ENCODE measurements at regions of chr17 and their contacts with region 1.

Region 1: GRCh38 chr17:8991514-8992285 is 26.2 kb upstream of the PIK3R5 start:
- DNase-seq: peak in 6 of 10 donors; percentile 28 to 74 (median 55)
- H3K4me3 ChIP-seq: no peak overlapping the region
- H3K27ac ChIP-seq: no peak overlapping the region
- H3K27me3 ChIP-seq: peaks cover 0 to 28% (median 0%) of the 10 kb centered on the region in 45 donors
- CTCF ChIP-seq: peak; percentile 60 to 93 (median 80)

Region 2: DNA sequence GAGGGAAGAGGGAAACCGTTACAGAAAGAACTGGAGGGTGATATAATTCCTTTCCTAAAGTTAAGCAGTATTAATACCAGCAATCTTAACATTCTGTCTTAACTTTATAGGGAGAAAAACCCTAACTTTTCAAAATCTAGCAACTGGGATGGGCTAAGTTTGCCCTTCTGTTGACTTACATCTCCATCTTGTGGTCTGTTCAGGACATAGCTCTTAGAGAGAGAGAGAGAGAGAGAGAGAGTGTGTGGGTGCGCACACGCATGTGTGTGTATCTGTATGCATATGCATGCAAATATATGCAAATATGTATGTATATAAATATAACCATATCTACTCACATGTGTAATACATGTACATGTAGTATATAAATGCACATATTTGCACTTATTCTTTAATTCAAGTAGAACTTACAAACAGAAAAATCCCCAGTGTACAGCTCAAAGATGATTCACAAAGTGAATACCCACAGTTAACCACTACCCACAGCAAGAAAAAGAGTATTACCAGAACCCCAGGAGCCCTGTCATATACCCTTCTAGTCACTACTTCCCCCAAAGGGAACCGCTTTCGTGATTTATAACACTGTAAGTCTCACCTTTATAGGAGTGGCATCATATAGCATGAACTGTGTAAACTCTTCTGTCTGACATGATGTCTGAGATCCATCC is 537.5 kb after region 1 on chr17:
- intact Hi-C with region 1: loop called (anchors 5 kb)
- DNase-seq: no peak
- H3K4me3 ChIP-seq: no peak overlapping the region
- H3K27ac ChIP-seq: no peak overlapping the region
- H3K27me3 ChIP-seq: no peaks in the 10 kb centered on the region
- CTCF ChIP-seq: peak in 54 of 56 donors; percentile 21 to 70 (median 50)